H1 (cell line): ENCODE measurements at regions of chr2 and their contacts with region 1.

Region 1: GRCh38 chr2:85437488-85438284 is 19.2 kb downstream of the SH2D6 start:
- DNase-seq: peak in 1 of 2 experiments; percentile 82
- H3K4me3 ChIP-seq: peak overlapping the region in 3 of 4 experiments; percentile 23 to 56 (median 35); a peak in 7 of 8 replicates
- H3K27ac ChIP-seq: peak overlapping the region; percentile 69; the same call in 1 of the 2 replicates
- H3K4me1 ChIP-seq: peaks cover 7 to 39% (median 32%) of the 10 kb centered on the region in 4 experiments
- H3K27me3 ChIP-seq: peaks cover 0 to 14% (median 5%) of the 10 kb centered on the region in 4 experiments; a peak in 4 of 7 replicates
- CTCF ChIP-seq: no peak
- EP300 ChIP-seq: peak in 1 of 2 experiments; percentile 39; a peak in 1 of 3 replicates
- POLR2A ChIP-seq: peak in 1 of 2 experiments; percentile 80; a peak in 2 of 3 replicates
- RAD21 ChIP-seq: no peak

Region 2: GRCh38 chr2:85369500-85369899 is 68.2 kb before region 1 on chr2:
- CTCF ChIA-PET with region 1: no interaction called
- POLR2A ChIA-PET with region 1: no interaction called
- DNase-seq: no peak
- H3K4me3 ChIP-seq: no peak overlapping the region
- H3K27ac ChIP-seq: no peak overlapping the region
- H3K4me1 ChIP-seq: no peaks in the 10 kb centered on the region
- H3K27me3 ChIP-seq: no peaks in the 10 kb centered on the region
- CTCF ChIP-seq: no peak
- EP300 ChIP-seq: no peak
- POLR2A ChIP-seq: no peak
- RAD21 ChIP-seq: no peak

Region 3: GRCh38 chr2:85409845-85410583 is 27.7 kb before region 1 on chr2 and contains the start of gene CAPG:
- CTCF ChIA-PET with region 1: no interaction called
- POLR2A ChIA-PET with region 1: interaction called, 12 read pairs
- DNase-seq: peak in 1 of 2 experiments; percentile 53
- H3K4me3 ChIP-seq: peak within 1 kb of the TSS in 1 of 4 experiments; percentile 28; a peak in 1 of 8 replicates
- H3K27ac ChIP-seq: no peak within 1 kb of the TSS
- H3K4me1 ChIP-seq: peaks cover 5 to 19% (median 15%) of the 10 kb centered on the region in 4 experiments
- H3K27me3 ChIP-seq: peaks cover 0 to 3% (median 1%) of the 10 kb centered on the region in 4 experiments; a peak in 1 of 7 replicates
- CTCF ChIP-seq: no peak
- EP300 ChIP-seq: no peak
- POLR2A ChIP-seq: no peak
- RAD21 ChIP-seq: no peak
- total RNA-seq, gene CAPG: 78.6 and 80.5 TPM in 2 replicates